GM12878 (cell line): ENCODE measurements at regions of chr1 and their contacts with region 1.

Region 1: DNA sequence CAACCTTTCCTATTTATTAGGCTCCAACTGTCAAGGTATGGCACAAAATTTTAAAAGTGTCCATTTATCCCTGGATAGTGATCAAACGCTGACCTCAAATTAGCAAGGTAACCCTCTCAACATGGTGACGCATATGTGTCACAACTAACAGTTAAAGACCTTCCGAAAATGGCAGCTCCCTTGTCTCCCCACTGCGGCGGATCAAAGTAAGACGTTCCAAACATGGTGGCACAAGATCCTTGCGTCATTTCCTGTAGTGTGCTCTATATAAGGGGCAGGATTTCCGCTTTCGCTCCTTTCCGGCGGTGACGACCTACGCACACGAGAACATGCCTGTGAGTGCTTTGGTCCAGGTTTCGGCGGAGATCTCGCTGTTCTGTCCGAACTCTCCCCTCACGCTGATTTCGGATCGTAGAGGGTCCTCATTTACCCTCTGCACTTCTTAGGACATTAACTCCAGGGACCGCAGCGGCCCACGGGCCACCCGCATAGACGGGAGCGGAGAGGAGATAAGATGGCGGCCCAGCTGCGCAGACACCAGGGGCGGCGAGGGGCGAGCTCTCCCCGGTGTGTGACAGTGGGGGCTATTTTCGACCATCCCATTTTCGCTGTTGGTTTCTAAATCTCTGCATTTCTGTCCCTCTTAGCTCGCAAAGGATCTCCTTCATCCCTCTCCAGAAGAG is at the start of gene RPS27:
- DNase-seq: peak; percentile 97
- ATAC-seq: peak; percentile 82
- H3K4me3 ChIP-seq: peak within 1 kb of the TSS; percentile 86
- H3K27ac ChIP-seq: peak within 1 kb of the TSS; percentile 96
- H3K4me1 ChIP-seq: peaks cover 9% of the 10 kb centered on the region
- H3K27me3 ChIP-seq: no peaks in the 10 kb centered on the region
- CTCF ChIP-seq: no peak
- EP300 ChIP-seq: no peak
- POLR2A ChIP-seq: peak; percentile 100
- RAD21 ChIP-seq: no peak
- polyA plus RNA-seq, gene RPS27: 9,903 to 14,234 TPM

Region 2: DNA sequence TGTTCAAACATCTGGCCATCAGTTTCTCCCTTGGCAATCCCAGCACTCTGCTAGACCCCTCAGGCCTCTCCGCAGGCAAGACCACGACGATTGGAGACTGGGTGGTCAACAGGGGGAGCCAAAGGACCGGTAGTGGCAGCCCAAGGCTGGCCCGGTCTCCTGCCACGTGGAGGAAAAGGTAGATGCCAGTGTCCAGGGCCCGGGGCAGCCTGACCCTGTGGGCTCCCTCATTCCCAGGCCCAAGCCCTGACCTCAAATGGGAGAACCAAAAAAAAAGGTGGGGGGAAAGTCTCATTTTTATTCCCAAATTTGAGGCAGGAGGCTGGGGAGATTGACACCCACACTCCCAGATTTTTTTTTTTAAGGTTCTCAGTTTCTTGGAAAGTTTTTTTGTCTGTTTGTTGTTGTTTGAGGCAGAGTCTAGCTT is 479.6 kb before region 1 on chr1:
- CTCF ChIA-PET with region 1: interaction called, 6 read pairs
- POLR2A ChIA-PET with region 1: no interaction called
- RAD21 ChIA-PET with region 1: no interaction called
- SMC1A ChIA-PET with region 1: interaction called, 4 read pairs
- in situ Hi-C with region 1: loop called (anchors 10 kb)
- intact Hi-C with region 1: no loop called
- DNase-seq: no peak
- ATAC-seq: peak; percentile 97
- H3K4me3 ChIP-seq: no peak overlapping the region
- H3K27ac ChIP-seq: no peak overlapping the region
- H3K4me1 ChIP-seq: no peaks in the 10 kb centered on the region
- H3K27me3 ChIP-seq: no peaks in the 10 kb centered on the region
- CTCF ChIP-seq: peak; percentile 85 to 97 (median 91)
- EP300 ChIP-seq: no peak
- POLR2A ChIP-seq: no peak
- RAD21 ChIP-seq: peak; percentile 92

Region 3: DNA sequence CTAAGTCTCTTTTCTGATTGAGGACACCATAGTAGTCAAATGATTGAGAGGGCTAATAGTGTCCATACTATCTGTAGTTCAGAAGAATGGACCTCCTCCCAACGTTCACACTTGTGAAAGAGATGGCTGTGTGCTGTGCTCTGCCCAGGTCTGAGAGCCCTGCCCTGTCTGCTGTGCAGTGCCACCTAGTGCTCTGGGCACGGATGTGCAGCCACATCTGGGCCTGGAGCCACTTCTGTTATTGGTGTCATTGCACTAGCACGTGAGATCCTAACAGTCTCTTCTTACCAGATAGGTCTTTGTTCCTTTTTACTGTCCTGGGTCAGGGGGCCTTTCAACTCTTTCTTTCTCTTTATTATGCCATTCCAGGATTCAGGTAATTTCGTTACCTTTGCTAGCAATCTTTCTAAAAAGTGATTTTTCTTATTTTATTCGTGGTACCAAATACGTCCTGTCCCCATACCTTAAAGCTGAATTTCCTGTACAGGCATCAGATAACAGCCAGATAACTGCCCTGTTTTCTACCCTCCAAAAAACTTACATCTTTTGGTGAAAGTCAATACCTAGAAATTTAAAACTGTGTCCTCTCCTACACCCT is 241.1 kb before region 1 on chr1:
- CTCF ChIA-PET with region 1: interaction called, 10 read pairs
- POLR2A ChIA-PET with region 1: interaction called, 4 read pairs
- RAD21 ChIA-PET with region 1: interaction called, 7 read pairs
- SMC1A ChIA-PET with region 1: interaction called, 3 read pairs
- in situ Hi-C with region 1: no loop called
- intact Hi-C with region 1: no loop called
- DNase-seq: peak; percentile 48
- ATAC-seq: peak; percentile 100
- H3K4me3 ChIP-seq: no peak overlapping the region
- H3K27ac ChIP-seq: no peak overlapping the region
- H3K4me1 ChIP-seq: no peaks in the 10 kb centered on the region; the same call in 1 of the 2 replicates
- H3K27me3 ChIP-seq: no peaks in the 10 kb centered on the region
- CTCF ChIP-seq: peak; percentile 97 to 99 (median 99); a peak in 5 of 6 replicates
- EP300 ChIP-seq: no peak
- POLR2A ChIP-seq: no peak
- RAD21 ChIP-seq: peak; percentile 82

Region 4: DNA sequence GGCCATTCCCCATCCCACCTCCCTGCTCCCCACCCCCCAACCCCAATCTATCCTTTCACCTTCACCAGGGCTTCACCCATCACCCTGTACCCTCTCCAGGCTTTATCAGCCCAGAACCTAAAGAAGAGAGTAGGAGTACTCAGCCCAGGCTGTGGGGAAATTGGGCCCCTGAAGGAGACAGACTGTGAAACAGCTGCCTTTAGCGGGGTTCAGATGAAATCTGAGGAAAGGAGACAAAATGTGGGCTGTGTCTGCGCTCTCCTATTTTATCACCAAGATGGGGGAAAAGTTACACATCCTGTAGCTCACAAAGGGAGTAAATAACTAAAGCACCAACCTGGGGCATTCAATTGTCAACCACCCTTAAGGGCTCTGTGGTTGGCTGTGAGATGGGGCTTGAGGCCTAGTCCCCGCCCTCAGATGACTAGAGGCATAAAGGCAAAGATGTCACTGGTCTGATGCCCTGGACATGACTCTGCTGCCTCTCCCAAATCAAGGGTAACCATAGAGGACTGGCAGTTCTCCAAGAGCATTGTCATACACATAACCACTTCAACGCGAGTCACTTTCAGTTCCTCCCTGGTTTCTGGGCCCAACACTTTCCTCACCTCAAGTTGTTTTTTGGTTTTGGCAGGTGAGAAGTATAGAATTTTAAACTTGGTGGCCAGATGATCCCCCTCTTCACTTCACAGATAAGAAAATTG is 185.4 kb before region 1 on chr1:
- CTCF ChIA-PET with region 1: interaction called, 14 read pairs
- POLR2A ChIA-PET with region 1: interaction called, 3 read pairs
- RAD21 ChIA-PET with region 1: interaction called, 6 read pairs
- SMC1A ChIA-PET with region 1: interaction called, 21 read pairs
- in situ Hi-C with region 1: no loop called
- intact Hi-C with region 1: no loop called
- DNase-seq: peak; percentile 98
- ATAC-seq: peak; percentile 99
- H3K4me3 ChIP-seq: 0 out of 2 replicates have a peak overlapping the region, but pooled peaks have one; percentile 38
- H3K27ac ChIP-seq: peak overlapping the region; percentile 89
- H3K4me1 ChIP-seq: peaks cover 39% of the 10 kb centered on the region
- H3K27me3 ChIP-seq: no peaks in the 10 kb centered on the region
- CTCF ChIP-seq: no peak
- EP300 ChIP-seq: peak; percentile 90 to 98
- POLR2A ChIP-seq: peak; percentile 38; the same call in 1 of the 2 replicates
- RAD21 ChIP-seq: no peak

Region 5: GRCh38 chr1:153922972-153923925 is 67.4 kb before region 1 on chr1 and contains the start of gene GATAD2B:
- CTCF ChIA-PET with region 1: interaction called, 14 read pairs
- POLR2A ChIA-PET with region 1: interaction called, 4 read pairs
- RAD21 ChIA-PET with region 1: interaction called, 10 read pairs
- SMC1A ChIA-PET with region 1: interaction called, 30 read pairs
- in situ Hi-C with region 1: no loop called
- intact Hi-C with region 1: loop called (anchors 2 kb)
- DNase-seq: peak; percentile 100
- ATAC-seq: peak; percentile 96
- H3K4me3 ChIP-seq: peak within 1 kb of the TSS; percentile 98
- H3K27ac ChIP-seq: peak within 1 kb of the TSS; percentile 99
- H3K4me1 ChIP-seq: peaks cover 11% of the 10 kb centered on the region
- H3K27me3 ChIP-seq: no peaks in the 10 kb centered on the region
- CTCF ChIP-seq: no peak
- EP300 ChIP-seq: peak in 1 of 2 experiments; percentile 31; a peak in 1 of 4 replicates
- POLR2A ChIP-seq: peak; percentile 79
- RAD21 ChIP-seq: peak; percentile 20; the same call in 1 of the 2 replicates
- polyA plus RNA-seq, gene GATAD2B: 2.4 to 8.7 TPM

Region 6: DNA sequence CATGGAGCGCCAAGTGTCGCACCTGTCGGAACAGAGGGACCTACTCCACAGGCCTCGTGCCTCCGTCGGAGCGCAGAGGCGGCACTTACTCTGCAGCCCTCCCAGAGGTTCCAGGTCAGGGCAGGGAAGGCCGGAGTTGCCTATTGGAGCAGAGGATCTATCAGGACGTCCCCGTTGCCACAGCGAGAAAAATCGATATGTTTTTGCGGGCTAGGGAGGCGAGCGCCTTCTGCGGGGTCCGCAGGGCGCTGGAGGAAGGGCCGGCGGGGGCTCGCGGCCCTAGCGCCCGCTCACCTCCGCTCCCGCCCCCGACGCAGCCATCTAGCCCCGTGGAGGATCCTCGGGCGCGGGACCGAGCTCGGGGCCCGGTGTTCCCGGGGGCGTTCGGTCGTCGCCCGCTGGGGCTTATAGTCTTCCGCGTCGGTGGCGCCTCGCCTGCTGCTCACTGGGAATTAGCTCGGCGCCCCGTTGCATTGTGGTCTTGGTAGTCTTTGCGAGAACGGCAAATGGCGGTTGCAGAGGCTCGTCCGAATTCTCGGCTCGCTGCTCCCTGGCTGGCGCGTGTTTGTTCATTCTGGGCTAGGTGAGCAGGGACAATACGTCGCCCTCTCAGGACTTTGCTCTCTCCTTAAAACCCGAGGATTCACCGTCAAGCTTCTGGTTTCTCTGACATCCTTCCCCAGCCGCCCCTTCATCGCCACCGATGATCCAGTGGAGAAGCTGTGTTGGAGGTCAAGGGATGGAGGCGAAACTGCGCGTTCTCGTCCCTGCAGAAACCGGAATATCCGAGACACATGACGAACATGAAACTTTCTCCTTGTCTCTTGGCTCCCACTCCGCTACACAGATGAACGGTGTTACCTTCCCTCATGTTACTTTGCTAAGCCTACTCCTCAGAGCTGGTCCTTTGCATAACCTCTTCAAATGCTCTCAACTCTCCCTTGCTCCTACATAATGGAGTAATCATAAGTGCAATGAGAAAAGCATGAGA is 13.1 kb before region 1 on chr1 and contains the start of gene JTB:
- CTCF ChIA-PET with region 1: interaction called, 54 read pairs
- POLR2A ChIA-PET with region 1: interaction called, 26 read pairs
- RAD21 ChIA-PET with region 1: interaction called, 42 read pairs
- SMC1A ChIA-PET with region 1: interaction called, 20 read pairs
- in situ Hi-C with region 1: no loop called
- intact Hi-C with region 1: no loop called
- DNase-seq: no peak
- ATAC-seq: peak; percentile 95
- H3K4me3 ChIP-seq: peak within 1 kb of the TSS; percentile 87
- H3K27ac ChIP-seq: peak within 1 kb of the TSS; percentile 86
- H3K4me1 ChIP-seq: peaks cover 7% of the 10 kb centered on the region
- H3K27me3 ChIP-seq: no peaks in the 10 kb centered on the region
- CTCF ChIP-seq: no peak
- EP300 ChIP-seq: no peak
- POLR2A ChIP-seq: peak; percentile 95
- RAD21 ChIP-seq: no peak
- polyA plus RNA-seq, gene JTB: 25.0 to 67.7 TPM